ENCODE measurements at regions of chr14 and their contacts with region 1.

Region 1: GRCh38 chr14:99982537-99983250 is 82.5 kb upstream of the EVL start:
- DNase-seq: peak; percentile 65 to 74
- ATAC-seq: peak; percentile 92 to 97
- H3K4me3 ChIP-seq: no peak overlapping the region
- H3K27ac ChIP-seq: peak overlapping the region; percentile 4 to 46; a peak in 2 of 6 replicates
- H3K4me1 ChIP-seq: peaks cover 23% of the 10 kb centered on the region
- CTCF ChIP-seq: peak; percentile 97
- EP300 ChIP-seq: no peak
- POLR2A ChIP-seq: no peak
- RAD21 ChIP-seq: peak; percentile 94 to 96

Region 2: DNA sequence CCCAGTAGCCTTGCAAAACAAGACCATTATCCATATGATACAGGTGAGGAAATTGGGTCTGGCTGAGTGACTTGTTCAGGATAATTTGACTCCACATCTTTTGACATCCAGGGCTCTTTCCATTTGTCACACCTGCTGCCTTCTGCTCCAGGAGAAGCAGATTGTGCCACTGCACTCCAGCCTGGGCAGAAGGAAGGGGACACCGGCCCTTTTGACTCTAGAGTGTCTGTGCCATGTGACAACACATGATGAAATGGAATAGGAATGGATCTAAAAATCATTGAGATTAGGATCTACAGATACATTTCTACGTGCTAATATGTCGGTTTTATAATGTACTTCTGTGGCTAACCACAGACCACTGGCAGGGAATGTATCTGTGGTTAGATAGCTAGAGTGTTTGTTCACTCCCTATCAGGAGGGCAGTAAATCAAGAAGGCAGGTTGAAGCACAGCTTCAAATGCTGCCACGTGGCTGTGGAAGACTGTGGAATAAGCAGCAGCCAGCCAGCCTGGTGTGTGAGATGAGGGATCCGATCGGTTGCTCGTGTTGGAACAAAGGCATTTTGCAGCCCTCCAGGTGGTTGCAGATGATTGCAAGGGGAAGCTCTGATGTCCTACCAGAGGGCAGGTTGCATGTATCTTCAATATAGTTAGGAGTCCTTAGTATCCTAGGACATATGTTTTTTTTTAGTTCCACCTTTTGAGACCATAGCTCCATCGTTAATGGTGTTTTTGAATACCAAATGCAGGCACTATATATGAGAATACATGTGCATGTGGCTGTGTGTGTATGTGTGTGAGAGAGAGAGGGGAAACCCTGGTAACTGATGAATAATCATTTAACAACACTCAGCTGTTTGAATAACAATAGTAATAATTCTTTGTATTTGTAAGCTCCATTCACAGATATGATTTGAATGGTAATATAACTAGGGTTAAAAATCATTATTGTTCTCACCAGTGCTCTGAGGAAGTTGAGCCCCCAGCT is 160.9 kb before region 1 on chr14:
- CTCF ChIA-PET with region 1: no interaction called
- POLR2A ChIA-PET with region 1: no interaction called
- DNase-seq: no peak
- ATAC-seq: no peak; a peak in 1 of 6 replicates
- H3K4me3 ChIP-seq: no peak overlapping the region
- H3K27ac ChIP-seq: no peak overlapping the region
- H3K4me1 ChIP-seq: no peaks in the 10 kb centered on the region
- CTCF ChIP-seq: no peak
- EP300 ChIP-seq: no peak
- POLR2A ChIP-seq: no peak
- RAD21 ChIP-seq: no peak

Region 3: DNA sequence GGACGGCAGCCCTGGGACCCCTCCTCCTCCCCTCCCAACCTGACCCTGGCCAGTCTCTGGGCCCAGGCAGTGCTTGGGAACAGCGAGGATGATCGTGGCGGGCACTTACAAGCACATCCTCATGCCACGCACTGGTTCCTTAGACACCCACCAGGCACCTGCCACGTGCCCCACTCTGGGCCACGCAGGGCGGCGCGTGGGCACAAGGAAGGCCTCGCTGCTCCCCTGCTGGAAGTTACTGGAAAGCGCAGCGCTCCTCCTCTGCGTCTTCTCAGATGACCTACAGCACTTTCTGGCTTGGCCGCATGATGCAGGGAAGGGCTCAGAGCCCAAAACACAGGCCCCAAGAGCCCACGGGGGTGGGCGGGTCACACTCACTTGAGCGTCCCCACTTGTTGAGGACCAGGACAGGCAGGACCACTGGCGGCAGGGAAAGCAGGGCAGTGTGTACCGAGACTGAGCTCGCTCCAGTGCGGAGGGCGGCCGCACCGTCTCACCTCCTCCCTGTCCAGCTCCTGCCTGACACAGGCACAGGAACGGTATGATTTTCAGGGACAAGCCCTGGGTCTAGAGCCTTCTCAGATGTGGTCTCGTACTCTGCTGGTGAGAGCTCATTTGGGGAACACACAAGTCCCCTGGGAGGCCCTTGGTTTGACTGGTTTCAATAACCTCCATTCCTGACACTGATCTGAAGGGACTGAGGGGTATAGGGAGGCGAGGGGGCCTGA is 45.8 kb before region 1 on chr14:
- CTCF ChIA-PET with region 1: no interaction called
- POLR2A ChIA-PET with region 1: no interaction called
- DNase-seq: no peak
- ATAC-seq: peak; percentile 68 to 74; a peak in 3 of 6 replicates
- H3K4me3 ChIP-seq: no peak overlapping the region
- H3K27ac ChIP-seq: no peak overlapping the region
- H3K4me1 ChIP-seq: no peaks in the 10 kb centered on the region
- CTCF ChIP-seq: no peak
- EP300 ChIP-seq: no peak
- POLR2A ChIP-seq: no peak
- RAD21 ChIP-seq: no peak

Region 4: GRCh38 chr14:99995700-99996356 is 13.1 kb after region 1 on chr14:
- CTCF ChIA-PET with region 1: interaction called, 26 read pairs
- POLR2A ChIA-PET with region 1: no interaction called
- DNase-seq: peak; percentile 75 to 77
- ATAC-seq: peak; percentile 97 to 99
- H3K4me3 ChIP-seq: no peak overlapping the region
- H3K27ac ChIP-seq: 0 out of 6 replicates have a peak overlapping the region, but pooled peaks of 1 of the 2 experiments have one; percentile 37
- H3K4me1 ChIP-seq: no peaks in the 10 kb centered on the region
- CTCF ChIP-seq: peak; percentile 50
- EP300 ChIP-seq: no peak
- POLR2A ChIP-seq: no peak
- RAD21 ChIP-seq: peak; percentile 32 to 63; a peak in 3 of 5 replicates

Region 5: DNA sequence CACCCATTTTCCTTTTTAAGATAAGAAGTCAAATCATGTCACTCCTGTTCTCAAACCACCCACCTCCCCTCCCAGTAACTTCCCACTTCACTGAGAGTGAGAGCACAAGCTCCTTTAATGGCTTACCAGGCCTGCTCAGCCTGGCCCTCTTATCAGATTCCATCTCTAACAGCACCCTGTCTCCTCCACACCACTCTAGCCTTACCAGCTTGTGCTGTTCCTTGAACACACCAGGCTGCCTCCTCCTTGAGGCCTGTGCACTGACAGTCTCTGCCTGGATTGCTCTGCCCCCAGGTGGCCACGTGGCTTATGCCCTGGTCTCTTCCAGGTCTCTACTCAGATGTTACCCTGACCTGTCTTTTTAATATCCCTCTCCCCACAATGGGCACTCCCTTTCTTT is 42.4 kb after region 1 on chr14:
- CTCF ChIA-PET with region 1: interaction called, 73 read pairs
- POLR2A ChIA-PET with region 1: no interaction called
- DNase-seq: peak; percentile 49 to 73
- ATAC-seq: peak; percentile 94 to 95
- H3K4me3 ChIP-seq: no peak overlapping the region
- H3K27ac ChIP-seq: peak overlapping the region; percentile 45 to 67; a peak in 4 of 6 replicates
- H3K4me1 ChIP-seq: peaks cover 41% of the 10 kb centered on the region
- CTCF ChIP-seq: peak; percentile 62
- EP300 ChIP-seq: no peak
- POLR2A ChIP-seq: no peak
- RAD21 ChIP-seq: peak; percentile 67 to 79

Region 6: DNA sequence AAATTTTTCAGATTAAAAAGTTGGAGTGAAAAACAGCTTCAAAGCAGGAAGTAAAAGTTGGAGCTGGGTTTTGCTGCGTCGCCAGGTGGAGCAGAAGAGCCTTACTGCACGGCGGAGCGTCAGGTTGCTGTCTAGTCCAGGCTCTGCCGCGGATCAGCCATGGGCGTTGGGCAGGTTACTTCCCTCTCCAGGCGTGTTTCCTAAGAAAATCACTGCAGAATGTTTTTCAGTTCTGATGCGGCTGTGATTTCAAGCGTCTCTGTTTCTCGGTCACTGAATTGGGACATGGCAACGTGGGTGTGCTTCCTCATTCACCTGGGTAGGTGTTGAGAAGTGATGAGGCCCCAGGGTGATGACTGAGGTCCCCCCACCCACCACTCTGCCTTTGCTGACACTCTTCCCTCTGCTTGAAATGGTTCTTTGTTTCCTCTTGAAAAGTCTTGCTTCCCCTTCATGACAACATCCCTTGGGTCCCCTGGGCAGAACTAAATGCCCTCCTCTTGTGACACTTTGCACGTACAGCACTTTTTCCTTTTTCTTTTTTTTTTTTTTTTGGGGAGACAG is 90.2 kb after region 1 on chr14:
- CTCF ChIA-PET with region 1: interaction called, 10 read pairs
- POLR2A ChIA-PET with region 1: no interaction called
- DNase-seq: no peak
- ATAC-seq: no peak
- H3K4me3 ChIP-seq: no peak overlapping the region
- H3K27ac ChIP-seq: no peak overlapping the region
- H3K4me1 ChIP-seq: peaks cover 7% of the 10 kb centered on the region; the same call in 1 of the 3 replicates
- CTCF ChIP-seq: no peak
- EP300 ChIP-seq: no peak
- POLR2A ChIP-seq: no peak
- RAD21 ChIP-seq: no peak

Region 7: GRCh38 chr14:100108042-100108825 is 125.5 kb after region 1 on chr14:
- CTCF ChIA-PET with region 1: interaction called, 173 read pairs
- POLR2A ChIA-PET with region 1: no interaction called
- DNase-seq: peak; percentile 69 to 88
- ATAC-seq: peak; percentile 91 to 98
- H3K4me3 ChIP-seq: no peak overlapping the region
- H3K27ac ChIP-seq: peak overlapping the region; percentile 51 to 56; a peak in 4 of 6 replicates
- H3K4me1 ChIP-seq: peaks cover 27% of the 10 kb centered on the region
- CTCF ChIP-seq: peak; percentile 90
- EP300 ChIP-seq: no peak
- POLR2A ChIP-seq: no peak
- RAD21 ChIP-seq: peak; percentile 86 to 88

Region 8: GRCh38 chr14:100192672-100193416 is 210.2 kb after region 1 on chr14:
- CTCF ChIA-PET with region 1: interaction called, 64 read pairs
- POLR2A ChIA-PET with region 1: interaction called, 3 read pairs
- DNase-seq: peak; percentile 99
- ATAC-seq: peak; percentile 99 to 100
- H3K4me3 ChIP-seq: peak overlapping the region; percentile 33
- H3K27ac ChIP-seq: peak overlapping the region; percentile 85 to 92
- H3K4me1 ChIP-seq: peaks cover 15% of the 10 kb centered on the region
- CTCF ChIP-seq: peak; percentile 84
- EP300 ChIP-seq: no peak
- POLR2A ChIP-seq: peak; percentile 39
- RAD21 ChIP-seq: peak; percentile 83 to 94